Caco-2 (cell line): ENCODE measurements at regions of chr2 and their contacts with region 1.

Region 1: DNA sequence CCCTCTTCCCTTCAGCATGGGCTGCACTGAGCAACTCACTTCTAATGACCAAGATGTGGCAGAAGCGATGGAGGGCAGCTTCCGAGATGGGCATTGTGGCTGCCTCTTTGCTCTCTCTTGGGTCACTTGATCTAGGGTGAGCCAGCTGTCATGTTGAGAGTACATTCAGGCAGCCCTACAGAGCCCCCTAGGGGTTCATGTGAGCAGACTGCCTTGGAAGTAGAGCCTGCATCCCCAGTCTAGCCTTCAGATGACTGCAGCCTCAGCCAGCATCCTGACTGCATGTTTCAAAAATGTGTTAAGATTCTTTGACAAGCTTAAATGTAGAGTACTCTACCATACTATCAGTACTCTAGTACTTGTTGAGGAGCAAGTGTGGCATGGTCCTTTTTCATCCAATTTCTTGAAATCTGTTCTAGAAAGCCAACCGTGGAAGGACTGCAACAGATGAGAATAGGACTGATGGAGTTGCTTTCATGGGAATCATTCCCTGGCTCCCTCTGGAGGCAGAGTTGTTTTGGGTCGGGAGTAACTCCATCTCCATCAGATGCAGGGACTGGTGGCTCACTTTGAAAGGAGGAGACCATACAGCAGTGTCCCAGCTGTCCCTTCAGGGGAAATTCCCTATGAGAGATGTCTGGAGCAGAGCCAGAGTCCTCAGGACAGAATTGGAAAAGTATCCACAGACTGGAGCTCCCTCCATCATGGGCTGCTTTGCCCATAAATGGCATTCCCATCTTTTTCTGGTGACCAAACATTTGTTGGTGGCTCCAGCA is 144.1 kb downstream of the NCK2 start:
- DNase-seq: peak; percentile 80 to 81
- H3K4me3 ChIP-seq: no peak overlapping the region
- H3K4me3 Mint-ChIP-seq: no peak overlapping the region
- H3K27ac Mint-ChIP-seq: no peak overlapping the region
- H3K4me1 ChIP-seq: peaks cover 24% of the 10 kb centered on the region
- H3K4me1 Mint-ChIP-seq: peaks cover 30% of the 10 kb centered on the region
- H3K27me3 ChIP-seq: no peaks in the 10 kb centered on the region
- H3K27me3 Mint-ChIP-seq: no peaks in the 10 kb centered on the region
- CTCF ChIP-seq: peak; percentile 68 to 88

Region 2: DNA sequence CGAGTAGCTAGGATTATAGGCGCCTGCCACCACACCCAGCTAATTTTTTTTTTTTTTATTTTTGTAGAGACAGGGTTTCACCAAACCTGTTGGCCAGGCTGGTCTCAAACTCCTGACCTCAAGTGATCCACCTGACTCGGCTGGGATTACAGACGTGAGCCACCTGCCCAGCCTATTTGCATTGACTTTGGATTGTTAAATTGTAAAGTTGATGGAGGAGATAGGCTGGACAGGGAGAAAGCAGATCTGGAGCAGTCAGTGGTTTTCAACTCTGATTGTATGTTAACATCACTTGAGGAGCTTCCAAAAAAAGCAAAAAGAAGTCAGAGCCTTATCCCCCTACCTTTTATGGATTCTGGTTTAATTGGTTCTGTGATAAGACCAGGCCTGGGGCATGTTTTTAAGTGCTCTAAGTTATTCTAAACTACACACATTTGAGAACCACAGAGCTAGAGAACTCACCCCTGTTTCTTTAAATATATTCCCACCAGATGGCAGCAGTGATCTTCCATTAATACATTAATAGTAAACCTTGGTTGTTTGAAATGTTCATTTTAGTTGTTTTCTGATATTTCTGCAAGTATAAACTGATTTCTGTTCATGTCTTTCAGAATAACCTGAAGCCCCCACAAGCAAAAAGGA is 544.0 kb before region 1 on chr2:
- CTCF ChIA-PET with region 1: no interaction called
- POLR2A ChIA-PET with region 1: no interaction called
- intact Hi-C with region 1: loop called (anchors 5 kb)
- DNase-seq: peak in 1 of 2 experiments; percentile 50
- H3K4me3 ChIP-seq: no peak overlapping the region
- H3K4me3 Mint-ChIP-seq: no peak overlapping the region
- H3K27ac Mint-ChIP-seq: no peak overlapping the region
- H3K4me1 ChIP-seq: no peaks in the 10 kb centered on the region
- H3K4me1 Mint-ChIP-seq: peaks cover 5% of the 10 kb centered on the region
- H3K27me3 ChIP-seq: no peaks in the 10 kb centered on the region
- H3K27me3 Mint-ChIP-seq: no peaks in the 10 kb centered on the region
- CTCF ChIP-seq: peak; percentile 20 to 40

Region 3: GRCh38 chr2:105576440-105577252 is 312.2 kb before region 1 on chr2:
- CTCF ChIA-PET with region 1: interaction called, 10 read pairs
- POLR2A ChIA-PET with region 1: no interaction called
- intact Hi-C with region 1: loop called (anchors 1 kb)
- DNase-seq: peak in 1 of 2 experiments; percentile 45
- H3K4me3 ChIP-seq: no peak overlapping the region
- H3K4me3 Mint-ChIP-seq: peak overlapping the region; percentile 30
- H3K27ac Mint-ChIP-seq: peak overlapping the region; percentile 90
- H3K4me1 ChIP-seq: peaks cover 30% of the 10 kb centered on the region
- H3K4me1 Mint-ChIP-seq: peaks cover 36% of the 10 kb centered on the region
- H3K27me3 ChIP-seq: no peaks in the 10 kb centered on the region
- H3K27me3 Mint-ChIP-seq: no peaks in the 10 kb centered on the region
- CTCF ChIP-seq: peak; percentile 54 to 71

Region 4: GRCh38 chr2:105744091-105744908 is 144.5 kb before region 1 on chr2:
- CTCF ChIA-PET with region 1: interaction called, 5 read pairs
- POLR2A ChIA-PET with region 1: no interaction called
- intact Hi-C with region 1: loop called (anchors 1 kb)
- DNase-seq: peak; percentile 58 to 79
- H3K4me3 ChIP-seq: peak overlapping the region; percentile 67
- H3K4me3 Mint-ChIP-seq: peak overlapping the region; percentile 80
- H3K27ac Mint-ChIP-seq: peak overlapping the region; percentile 85
- H3K4me1 ChIP-seq: peaks cover 20% of the 10 kb centered on the region
- H3K4me1 Mint-ChIP-seq: peaks cover 21% of the 10 kb centered on the region
- H3K27me3 ChIP-seq: no peaks in the 10 kb centered on the region
- H3K27me3 Mint-ChIP-seq: no peaks in the 10 kb centered on the region
- CTCF ChIP-seq: no peak

Region 5: DNA sequence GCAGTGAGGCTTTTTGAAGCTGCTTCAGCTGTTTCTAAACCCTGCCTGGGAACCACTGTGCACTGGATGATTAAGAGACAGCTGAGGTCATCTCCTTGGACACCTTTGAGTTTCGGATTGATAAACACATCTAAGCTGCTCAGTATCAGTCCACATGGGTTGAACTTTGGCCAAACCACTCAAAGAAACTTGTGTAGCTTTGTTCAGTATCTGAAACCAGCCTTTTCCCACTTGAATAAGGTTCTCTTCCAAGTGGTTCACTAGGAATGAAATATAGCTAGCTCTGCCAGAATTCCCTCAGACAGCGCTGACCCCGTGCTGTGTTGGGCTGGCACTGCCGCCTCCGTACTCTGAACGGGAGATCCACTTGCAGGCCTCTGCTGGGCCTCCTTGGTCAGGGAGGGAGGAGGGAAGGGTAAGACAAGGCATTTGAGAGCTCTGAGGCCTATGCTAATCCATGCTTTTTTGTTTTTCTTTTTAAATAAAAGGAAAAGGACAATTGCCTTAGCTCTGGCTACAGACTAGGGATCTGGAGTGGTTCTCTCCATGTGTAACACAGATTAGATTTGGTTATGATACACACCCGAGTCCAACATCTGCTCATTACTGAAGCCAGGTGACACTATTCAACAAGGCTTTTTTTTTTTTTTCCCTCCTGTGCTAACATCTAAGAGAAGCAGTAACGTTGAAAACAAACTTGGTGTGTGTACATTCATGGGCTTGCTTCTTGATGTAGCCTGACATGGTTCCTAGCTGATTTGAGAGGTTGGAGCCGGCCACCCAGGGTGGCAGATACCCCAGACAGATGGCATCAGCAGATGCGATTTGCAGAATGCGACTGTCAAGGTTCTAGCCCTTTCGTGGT is 76.4 kb before region 1 on chr2:
- CTCF ChIA-PET with region 1: interaction called, 5 read pairs
- POLR2A ChIA-PET with region 1: no interaction called
- intact Hi-C with region 1: loop called (anchors 5 kb)
- DNase-seq: peak; percentile 67 to 69
- H3K4me3 ChIP-seq: no peak overlapping the region
- H3K4me3 Mint-ChIP-seq: peak overlapping the region; percentile 10
- H3K27ac Mint-ChIP-seq: peak overlapping the region; percentile 78
- H3K4me1 ChIP-seq: peaks cover 54% of the 10 kb centered on the region
- H3K4me1 Mint-ChIP-seq: peaks cover 28% of the 10 kb centered on the region
- H3K27me3 ChIP-seq: no peaks in the 10 kb centered on the region
- H3K27me3 Mint-ChIP-seq: no peaks in the 10 kb centered on the region
- CTCF ChIP-seq: no peak

Region 6: DNA sequence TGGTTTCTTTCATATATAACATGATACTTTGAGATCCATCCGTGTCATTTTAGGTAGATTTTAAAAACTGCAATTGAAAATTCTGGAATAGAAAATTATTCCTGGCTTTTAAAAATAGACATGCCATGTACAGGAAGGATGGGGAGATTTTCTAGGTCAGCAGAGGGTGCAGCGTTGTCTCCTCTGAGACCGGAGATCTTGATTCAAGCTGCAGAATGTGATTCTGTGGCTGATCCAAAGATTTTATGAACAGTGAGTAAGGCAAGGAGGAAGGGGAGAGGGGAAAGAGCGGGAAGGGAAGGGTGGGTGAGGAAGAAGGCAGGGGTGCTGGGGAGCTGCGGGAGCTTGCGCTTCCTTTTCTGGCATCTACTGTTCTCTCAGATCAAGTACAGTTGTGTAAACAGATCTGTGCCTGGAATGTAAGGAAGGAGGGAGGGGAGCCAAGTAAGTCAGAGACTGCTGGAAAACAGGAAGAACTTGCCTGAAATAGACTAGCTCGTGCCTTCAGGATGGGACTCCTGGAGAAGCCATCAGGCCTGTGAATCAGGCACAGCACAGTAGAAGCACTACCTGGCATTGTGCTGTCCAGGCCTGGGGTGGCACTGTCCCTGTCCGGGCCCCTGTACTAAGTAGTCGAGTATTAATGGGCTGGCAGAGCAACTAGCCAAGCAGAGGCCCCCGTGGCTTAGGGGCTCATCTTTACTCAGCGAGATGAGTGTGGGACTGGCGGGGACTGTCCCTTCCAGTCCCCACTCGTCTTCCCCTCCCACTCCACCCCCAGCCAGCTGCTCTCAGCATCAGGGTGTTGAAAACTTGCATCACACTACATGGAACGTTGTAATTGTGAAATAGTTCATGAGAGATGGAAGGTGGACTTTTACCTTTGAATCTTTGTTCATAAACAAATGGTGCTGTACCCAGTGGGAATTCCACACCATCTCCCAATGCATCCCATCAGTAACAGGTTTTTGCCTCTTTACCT is 141.8 kb after region 1 on chr2:
- CTCF ChIA-PET with region 1: no interaction called
- POLR2A ChIA-PET with region 1: no interaction called
- intact Hi-C with region 1: no loop called
- DNase-seq: peak; percentile 78 to 80
- H3K4me3 ChIP-seq: no peak overlapping the region
- H3K4me3 Mint-ChIP-seq: peak overlapping the region; percentile 14
- H3K27ac Mint-ChIP-seq: peak overlapping the region; percentile 87
- H3K4me1 ChIP-seq: peaks cover 50% of the 10 kb centered on the region
- H3K4me1 Mint-ChIP-seq: peaks cover 31% of the 10 kb centered on the region
- H3K27me3 ChIP-seq: no peaks in the 10 kb centered on the region
- H3K27me3 Mint-ChIP-seq: no peaks in the 10 kb centered on the region
- CTCF ChIP-seq: no peak